Activated naive CD4-positive, alpha-beta T cell treated with anti-CD3 and anti-CD28 coated beads for 36 hours (primary cell): ENCODE measurements at regions of chr1 and their contacts with region 1.

Region 1: GRCh38 chr1:31065310-31066217 is at the start of gene PUM1:
- DNase-seq: peak; percentile 99
- H3K4me3 Mint-ChIP-seq: peak within 1 kb of the TSS; percentile 99
- H3K27ac Mint-ChIP-seq: peak within 1 kb of the TSS; percentile 96
- H3K4me1 Mint-ChIP-seq: peaks cover 27% of the 10 kb centered on the region
- H3K27me3 Mint-ChIP-seq: no peaks in the 10 kb centered on the region
- total RNA-seq, gene PUM1: 84.9 to 89.7 TPM

Region 2: DNA sequence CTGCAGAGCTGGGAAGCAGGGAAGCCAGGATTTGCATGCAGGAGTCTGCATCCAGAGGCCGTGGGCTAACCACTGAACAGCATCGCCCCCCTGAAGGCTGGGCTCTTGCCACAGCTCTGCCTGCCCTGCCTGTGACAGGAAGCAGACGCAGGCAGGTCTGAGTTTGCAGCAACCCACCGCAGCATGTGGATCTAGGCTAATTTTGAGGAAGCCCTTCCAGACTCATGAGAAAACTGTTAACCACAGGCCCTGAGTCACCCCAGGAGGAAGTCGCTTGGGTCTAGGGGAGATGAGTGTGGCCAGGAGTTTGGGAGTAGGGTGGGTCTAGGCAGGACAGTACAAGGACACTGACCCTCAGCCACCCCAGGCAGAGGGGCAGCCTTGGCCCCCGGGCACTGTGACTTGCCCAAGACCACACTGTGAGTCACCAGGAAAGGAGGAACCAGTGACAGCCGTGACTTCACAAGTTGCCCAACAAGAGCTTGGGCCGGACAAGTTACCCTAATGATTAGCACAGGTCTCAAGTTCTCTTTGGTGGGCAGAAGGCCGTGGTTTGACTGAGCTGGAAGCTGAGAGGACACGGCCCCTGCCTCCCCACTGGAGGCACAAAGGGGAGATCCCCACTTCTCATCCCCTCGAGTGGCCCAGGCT is 308.9 kb before region 1 on chr1:
- CTCF ChIA-PET with region 1: no interaction called
- intact Hi-C with region 1: loop called (anchors 5 kb)
- DNase-seq: peak; percentile 91
- H3K4me3 Mint-ChIP-seq: peak overlapping the region; percentile 98
- H3K27ac Mint-ChIP-seq: peak overlapping the region; percentile 100
- H3K4me1 Mint-ChIP-seq: peaks cover 76% of the 10 kb centered on the region
- H3K27me3 Mint-ChIP-seq: no peaks in the 10 kb centered on the region

Region 3: GRCh38 chr1:31027693-31028526 is 37.7 kb before region 1 on chr1:
- CTCF ChIA-PET with region 1: no interaction called
- intact Hi-C with region 1: loop called (anchors 1 kb)
- DNase-seq: no peak
- H3K4me3 Mint-ChIP-seq: no peak overlapping the region
- H3K27ac Mint-ChIP-seq: no peak overlapping the region
- H3K4me1 Mint-ChIP-seq: peaks cover 79% of the 10 kb centered on the region
- H3K27me3 Mint-ChIP-seq: no peaks in the 10 kb centered on the region

Region 4: GRCh38 chr1:31054349-31054748 is 11.2 kb before region 1 on chr1:
- CTCF ChIA-PET with region 1: no interaction called
- intact Hi-C with region 1: loop called (anchors 1 kb)
- DNase-seq: peak; percentile 48
- H3K4me3 Mint-ChIP-seq: no peak overlapping the region
- H3K27ac Mint-ChIP-seq: peak overlapping the region; percentile 72
- H3K4me1 Mint-ChIP-seq: peaks cover 74% of the 10 kb centered on the region
- H3K27me3 Mint-ChIP-seq: no peaks in the 10 kb centered on the region

Region 5: GRCh38 chr1:31084782-31085569 is 19.4 kb after region 1 on chr1:
- CTCF ChIA-PET with region 1: no interaction called
- intact Hi-C with region 1: no loop called
- DNase-seq: no peak
- H3K4me3 Mint-ChIP-seq: no peak overlapping the region
- H3K27ac Mint-ChIP-seq: no peak overlapping the region
- H3K4me1 Mint-ChIP-seq: no peaks in the 10 kb centered on the region
- H3K27me3 Mint-ChIP-seq: no peaks in the 10 kb centered on the region

Region 6: GRCh38 chr1:31174556-31174955 is 109.0 kb after region 1 on chr1:
- CTCF ChIA-PET with region 1: no interaction called
- intact Hi-C with region 1: no loop called
- DNase-seq: no peak
- H3K4me3 Mint-ChIP-seq: no peak overlapping the region
- H3K27ac Mint-ChIP-seq: no peak overlapping the region
- H3K4me1 Mint-ChIP-seq: peaks cover 5% of the 10 kb centered on the region
- H3K27me3 Mint-ChIP-seq: peaks cover 9% of the 10 kb centered on the region

Region 7: DNA sequence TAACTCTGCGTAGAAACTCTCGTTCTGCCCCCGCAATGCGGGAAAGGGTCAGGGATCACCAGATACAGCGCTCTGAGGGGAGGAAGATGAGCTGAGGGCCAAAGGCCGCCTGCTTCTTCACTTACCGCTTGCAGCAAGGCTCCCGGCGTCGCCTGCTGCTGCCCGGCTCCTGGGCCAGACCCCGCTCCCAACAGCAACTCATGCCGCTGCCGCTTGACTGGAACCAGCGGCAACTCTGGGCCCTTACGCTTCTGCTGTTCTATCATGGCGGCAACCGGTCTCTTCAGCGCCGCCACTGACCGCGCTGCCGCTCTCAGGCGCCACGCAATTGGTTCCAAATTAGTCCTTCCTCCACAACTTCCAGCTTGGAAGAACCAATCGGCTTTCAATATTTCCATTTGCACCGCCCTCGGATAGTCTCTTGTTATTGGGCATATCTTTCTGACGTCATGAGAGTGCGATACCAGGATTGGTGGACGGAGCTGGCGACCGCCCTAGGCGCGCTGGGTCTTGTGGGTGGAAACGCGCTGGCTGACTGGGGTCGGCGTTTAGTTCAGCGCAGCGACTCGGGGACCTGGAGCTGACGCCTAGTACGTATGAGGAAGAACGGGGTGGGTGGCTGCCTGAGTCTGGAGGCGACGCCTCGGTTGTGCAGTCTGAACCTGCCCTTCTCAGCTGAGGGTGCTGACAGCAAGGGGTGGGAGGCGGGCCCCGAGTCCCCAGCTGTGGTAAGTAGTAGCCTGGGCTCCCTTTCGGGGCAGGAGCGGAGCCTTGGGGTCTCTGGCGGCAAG is 231.1 kb after region 1 on chr1 and contains the starts of genes SNRNP40 and ZCCHC17:
- CTCF ChIA-PET with region 1: no interaction called
- intact Hi-C with region 1: loop called (anchors 1 kb)
- DNase-seq: peak; percentile 97
- H3K4me3 Mint-ChIP-seq: no peak within 1 kb of the TSS
- H3K27ac Mint-ChIP-seq: no peak within 1 kb of the TSS
- H3K4me1 Mint-ChIP-seq: peaks cover 36% of the 10 kb centered on the region
- H3K27me3 Mint-ChIP-seq: no peaks in the 10 kb centered on the region
- total RNA-seq, gene SNRNP40: 101 to 106 TPM
- total RNA-seq, gene ZCCHC17: 20.8 to 21.2 TPM

Region 8: DNA sequence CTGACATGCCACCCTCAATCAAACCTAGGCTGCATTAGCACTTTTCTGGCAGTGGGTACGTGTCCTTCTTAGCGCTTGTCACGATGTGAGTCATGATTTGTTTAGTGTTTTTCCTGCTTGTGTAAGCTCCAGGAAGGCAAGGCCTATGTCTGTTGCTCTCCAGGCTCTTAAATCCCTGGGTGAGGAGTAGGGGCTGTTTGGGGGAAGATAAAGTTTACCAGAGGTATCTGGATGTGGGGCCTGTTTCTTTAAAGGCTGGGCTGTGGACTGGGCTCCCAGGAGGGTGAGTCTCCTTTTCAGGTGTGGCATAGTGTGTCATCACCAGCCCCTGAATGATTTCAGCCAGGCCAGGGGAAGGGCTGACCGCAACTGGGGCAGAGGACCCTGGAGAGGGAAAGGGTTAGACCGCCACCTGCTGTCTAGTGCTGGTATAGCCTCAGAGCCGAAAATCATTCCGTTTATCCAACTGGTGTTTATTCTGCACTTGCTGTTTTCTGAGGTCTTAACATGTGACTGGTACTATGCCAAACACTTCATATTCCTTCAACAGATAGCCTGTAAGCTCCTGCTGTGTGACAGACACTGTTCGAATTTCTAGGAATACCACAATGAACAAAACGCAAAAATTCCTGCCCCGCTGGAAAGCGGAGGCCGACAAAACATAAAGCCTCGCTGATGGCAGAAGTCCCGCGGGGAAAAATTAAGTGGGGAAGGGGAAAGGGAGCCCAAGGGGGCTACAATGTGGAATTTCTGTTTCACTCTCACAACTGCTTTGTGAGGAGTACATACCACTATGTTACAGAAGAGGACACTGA is 357.1 kb after region 1 on chr1:
- CTCF ChIA-PET with region 1: no interaction called
- intact Hi-C with region 1: no loop called
- DNase-seq: peak; percentile 81
- H3K4me3 Mint-ChIP-seq: no peak overlapping the region
- H3K27ac Mint-ChIP-seq: no peak overlapping the region
- H3K4me1 Mint-ChIP-seq: peaks cover 2% of the 10 kb centered on the region
- H3K27me3 Mint-ChIP-seq: peaks cover 22% of the 10 kb centered on the region